ENCODE measurements at regions of chr14 and their contacts with region 1.

Region 1: GRCh38 chr14:91418387-91419043 is 895 bp upstream of the CCDC88C start:
- DNase-seq: peak; percentile 86 to 88
- H3K4me3 ChIP-seq: peak overlapping the region; percentile 83
- H3K4me3 Mint-ChIP-seq: peak overlapping the region; percentile 89
- H3K27ac Mint-ChIP-seq: peak overlapping the region; percentile 44
- H3K4me1 ChIP-seq: peaks cover 40% of the 10 kb centered on the region
- H3K4me1 Mint-ChIP-seq: peaks cover 23% of the 10 kb centered on the region
- H3K27me3 ChIP-seq: no peaks in the 10 kb centered on the region
- H3K27me3 Mint-ChIP-seq: no peaks in the 10 kb centered on the region
- CTCF ChIP-seq: peak; percentile 92 to 95

Region 2: DNA sequence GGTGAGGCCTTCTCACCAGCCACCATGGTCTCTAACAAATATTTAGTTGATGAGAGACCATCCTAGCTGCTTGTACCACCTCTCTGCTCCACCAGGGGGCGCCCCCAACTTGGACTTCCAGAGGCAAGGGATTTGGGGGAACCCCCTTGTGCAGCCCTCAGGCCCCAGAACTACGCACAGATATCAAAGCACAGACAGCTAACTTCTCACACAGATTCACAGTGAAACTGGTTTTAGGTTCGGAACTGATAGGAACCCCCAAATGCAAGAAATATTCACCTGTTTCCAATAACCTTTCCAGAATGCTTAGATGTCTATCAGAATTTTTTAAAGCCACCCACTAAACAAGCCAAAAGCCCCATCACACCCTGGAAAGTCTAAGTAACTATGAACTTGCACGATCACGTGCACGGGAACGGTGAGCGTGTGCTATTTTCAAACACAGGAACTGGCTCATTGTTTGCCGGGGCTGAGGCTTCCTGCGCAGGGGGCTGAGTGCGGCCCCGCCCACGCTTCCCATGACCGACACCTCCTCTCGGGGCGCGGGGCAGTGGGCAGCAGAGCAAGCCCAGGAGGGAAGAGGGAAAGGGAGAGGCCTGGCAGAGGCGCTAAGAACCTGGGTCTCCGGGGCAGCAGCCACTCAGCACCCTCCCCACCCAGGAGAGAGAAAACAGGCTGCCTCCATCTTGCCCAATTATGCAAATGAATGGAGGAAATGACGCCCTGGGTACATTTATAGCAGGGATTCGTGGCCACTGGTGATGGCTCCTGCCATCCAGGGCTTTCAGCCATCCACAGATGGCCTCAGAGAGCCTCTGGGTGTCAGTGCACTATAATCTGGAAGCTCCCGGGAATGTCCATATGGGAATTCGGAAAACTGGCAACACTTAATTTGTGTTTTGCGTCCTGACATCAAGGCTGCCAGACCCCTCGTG is 94.6 kb before region 1 on chr14:
- CTCF ChIA-PET with region 1: interaction called, 19 read pairs
- POLR2A ChIA-PET with region 1: interaction called, 3 read pairs
- intact Hi-C with region 1: loop called (anchors 1 kb)
- DNase-seq: peak; percentile 69 to 79
- H3K4me3 ChIP-seq: no peak overlapping the region
- H3K4me3 Mint-ChIP-seq: no peak overlapping the region
- H3K27ac Mint-ChIP-seq: no peak overlapping the region
- H3K4me1 ChIP-seq: no peaks in the 10 kb centered on the region
- H3K4me1 Mint-ChIP-seq: no peaks in the 10 kb centered on the region
- H3K27me3 ChIP-seq: no peaks in the 10 kb centered on the region
- H3K27me3 Mint-ChIP-seq: no peaks in the 10 kb centered on the region
- CTCF ChIP-seq: peak; percentile 92 to 95

Region 3: GRCh38 chr14:91363776-91364523 is 54.6 kb before region 1 on chr14:
- CTCF ChIA-PET with region 1: no interaction called
- POLR2A ChIA-PET with region 1: no interaction called
- intact Hi-C with region 1: loop called (anchors 5 kb)
- DNase-seq: no peak
- H3K4me3 ChIP-seq: no peak overlapping the region
- H3K4me3 Mint-ChIP-seq: no peak overlapping the region
- H3K27ac Mint-ChIP-seq: no peak overlapping the region
- H3K4me1 ChIP-seq: peaks cover 4% of the 10 kb centered on the region; the same call in 1 of the 2 replicates
- H3K4me1 Mint-ChIP-seq: no peaks in the 10 kb centered on the region
- H3K27me3 ChIP-seq: no peaks in the 10 kb centered on the region
- H3K27me3 Mint-ChIP-seq: no peaks in the 10 kb centered on the region
- CTCF ChIP-seq: no peak

Region 4: DNA sequence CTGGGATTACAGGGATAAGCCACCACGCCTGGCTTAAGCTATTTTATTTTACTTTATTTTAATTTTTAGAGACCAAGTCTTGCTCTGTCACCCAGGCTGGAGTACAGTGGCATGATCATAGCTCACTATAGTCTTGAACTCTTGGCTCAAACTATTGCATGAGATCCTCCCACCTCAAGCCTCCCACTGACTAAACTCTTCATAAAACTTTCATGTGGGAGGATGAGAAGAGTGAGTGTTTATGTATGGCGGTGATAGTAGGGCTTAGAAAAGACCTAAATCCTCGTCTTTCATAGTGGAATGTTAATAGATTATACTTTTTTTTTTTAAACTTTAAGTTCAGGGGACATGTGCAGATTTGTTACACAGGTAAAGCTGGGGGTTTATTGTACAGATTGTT is 115.1 kb after region 1 on chr14:
- CTCF ChIA-PET with region 1: no interaction called
- POLR2A ChIA-PET with region 1: no interaction called
- intact Hi-C with region 1: no loop called
- DNase-seq: no peak
- H3K4me3 ChIP-seq: no peak overlapping the region
- H3K4me3 Mint-ChIP-seq: no peak overlapping the region
- H3K27ac Mint-ChIP-seq: no peak overlapping the region
- H3K4me1 ChIP-seq: peaks cover 9% of the 10 kb centered on the region
- H3K4me1 Mint-ChIP-seq: no peaks in the 10 kb centered on the region
- H3K27me3 ChIP-seq: no peaks in the 10 kb centered on the region
- H3K27me3 Mint-ChIP-seq: no peaks in the 10 kb centered on the region
- CTCF ChIP-seq: no peak